ENCODE measurements at regions of chr18 and their contacts with region 1.

Region 1: DNA sequence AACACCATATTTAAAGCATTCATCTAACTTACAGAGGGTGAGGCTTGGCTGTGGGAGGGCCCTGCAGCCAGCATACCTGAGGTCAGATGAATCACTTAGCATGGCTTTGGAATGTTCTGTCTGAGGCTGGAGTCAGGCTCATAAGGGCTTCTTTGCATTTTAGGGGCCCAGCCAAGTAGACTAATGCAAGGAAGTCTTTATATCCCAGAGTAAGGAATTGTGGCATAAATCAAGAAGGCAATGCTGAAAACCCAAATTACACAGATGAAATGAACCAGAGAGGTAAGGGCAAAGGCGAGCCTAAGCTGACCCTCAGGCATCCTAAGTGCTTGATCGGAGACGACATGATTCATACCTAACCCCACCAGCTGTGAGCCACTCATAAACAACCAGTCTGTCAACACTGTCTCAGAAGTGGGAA is 383.6 kb downstream of the DCC start:
- DNase-seq: no peak
- ATAC-seq: no peak
- H3K4me3 ChIP-seq: no peak overlapping the region
- H3K4me3 Mint-ChIP-seq: no peak overlapping the region
- H3K27ac ChIP-seq: no peak overlapping the region
- H3K27ac Mint-ChIP-seq: no peak overlapping the region
- H3K4me1 ChIP-seq: no peaks in the 10 kb centered on the region
- H3K4me1 Mint-ChIP-seq: no peaks in the 10 kb centered on the region
- H3K27me3 ChIP-seq: no peaks in the 10 kb centered on the region
- H3K27me3 Mint-ChIP-seq: no peaks in the 10 kb centered on the region

Region 2: GRCh38 chr18:52813635-52814416 is 90.3 kb after region 1 on chr18:
- CTCF ChIA-PET with region 1: no interaction called
- POLR2A ChIA-PET with region 1: interaction called in 1 of 2 experiments, 17 read pairs
- DNase-seq: no peak
- ATAC-seq: no peak
- H3K4me3 ChIP-seq: no peak overlapping the region
- H3K4me3 Mint-ChIP-seq: no peak overlapping the region
- H3K27ac ChIP-seq: no peak overlapping the region
- H3K27ac Mint-ChIP-seq: no peak overlapping the region
- H3K4me1 ChIP-seq: no peaks in the 10 kb centered on the region
- H3K4me1 Mint-ChIP-seq: no peaks in the 10 kb centered on the region
- H3K27me3 ChIP-seq: no peaks in the 10 kb centered on the region
- H3K27me3 Mint-ChIP-seq: no peaks in the 10 kb centered on the region

Measured in T-cell (primary cell).